OCI-LY7 (cell line): ENCODE measurements at regions of chr6 and their contacts with region 1.

Region 1: DNA sequence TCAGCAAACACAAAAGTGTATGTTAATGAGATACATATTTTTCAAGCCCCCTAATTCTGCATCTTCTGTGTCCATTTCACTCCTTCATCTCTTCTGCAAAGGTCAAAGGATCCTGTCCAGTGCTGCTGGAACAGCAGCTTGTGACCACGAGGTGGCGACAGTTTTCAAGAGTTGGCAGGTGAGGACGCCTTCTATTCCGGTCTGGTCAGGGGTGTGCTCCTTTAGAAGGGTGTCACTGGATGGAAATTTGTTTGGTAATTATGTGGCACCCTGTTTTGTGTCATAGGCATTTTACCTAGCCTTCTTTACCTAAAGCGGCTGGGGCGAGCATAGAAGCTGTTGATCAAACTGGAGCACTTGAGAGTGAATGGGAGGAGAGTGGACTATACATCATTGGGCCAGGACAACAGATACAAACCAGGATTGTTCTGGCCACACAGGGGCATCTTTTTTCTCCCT is 32.9 kb upstream of the ERVFRD-1 start:
- DNase-seq: peak; percentile 71
- H3K4me3 ChIP-seq: no peak overlapping the region
- H3K27ac ChIP-seq: no peak overlapping the region
- H3K4me1 ChIP-seq: no peaks in the 10 kb centered on the region
- CTCF ChIP-seq: peak; percentile 98

Region 2: DNA sequence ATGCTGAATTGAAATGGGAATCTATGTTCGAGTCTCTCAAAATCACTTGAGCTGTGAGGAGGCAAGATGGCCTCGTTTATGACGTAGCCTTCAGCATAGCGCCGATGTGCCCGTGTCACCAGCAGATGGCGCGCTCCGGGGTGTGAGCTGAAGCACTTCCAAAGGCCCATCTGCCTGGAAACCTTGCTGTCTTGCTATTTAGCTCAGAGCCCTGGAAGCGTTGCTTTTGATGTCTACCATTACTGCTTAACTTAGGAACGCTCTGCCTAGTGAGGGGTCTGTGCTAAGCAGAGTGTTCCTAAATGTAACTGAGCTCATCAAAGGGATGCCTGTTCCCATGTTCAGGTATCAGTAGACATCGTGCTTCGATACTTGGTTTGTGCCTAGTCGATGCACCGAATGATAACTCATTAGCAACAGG is 189.8 kb before region 1 on chr6:
- CTCF ChIA-PET with region 1: no interaction called
- POLR2A ChIA-PET with region 1: no interaction called
- intact Hi-C with region 1: loop called (anchors 5 kb)
- DNase-seq: peak; percentile 71
- H3K4me3 ChIP-seq: no peak overlapping the region
- H3K27ac ChIP-seq: no peak overlapping the region
- H3K4me1 ChIP-seq: no peaks in the 10 kb centered on the region
- CTCF ChIP-seq: peak; percentile 92

Region 3: GRCh38 chr6:11428895-11429294 is 284.5 kb after region 1 on chr6:
- CTCF ChIA-PET with region 1: no interaction called
- POLR2A ChIA-PET with region 1: no interaction called
- intact Hi-C with region 1: no loop called
- DNase-seq: peak; percentile 18
- H3K4me3 ChIP-seq: no peak overlapping the region
- H3K27ac ChIP-seq: no peak overlapping the region
- H3K4me1 ChIP-seq: peaks cover 17% of the 10 kb centered on the region
- CTCF ChIP-seq: no peak